Cardiac septum (tissue), 1 donor: ENCODE measurements at regions of chr7 and their contacts with region 1.

Region 1: GRCh38 chr7:152025077-152025936 is at the start of gene GALNT11:
- DNase-seq: peak; percentile 93
- total RNA-seq, gene GALNT11: 25.6 TPM

Region 2: DNA sequence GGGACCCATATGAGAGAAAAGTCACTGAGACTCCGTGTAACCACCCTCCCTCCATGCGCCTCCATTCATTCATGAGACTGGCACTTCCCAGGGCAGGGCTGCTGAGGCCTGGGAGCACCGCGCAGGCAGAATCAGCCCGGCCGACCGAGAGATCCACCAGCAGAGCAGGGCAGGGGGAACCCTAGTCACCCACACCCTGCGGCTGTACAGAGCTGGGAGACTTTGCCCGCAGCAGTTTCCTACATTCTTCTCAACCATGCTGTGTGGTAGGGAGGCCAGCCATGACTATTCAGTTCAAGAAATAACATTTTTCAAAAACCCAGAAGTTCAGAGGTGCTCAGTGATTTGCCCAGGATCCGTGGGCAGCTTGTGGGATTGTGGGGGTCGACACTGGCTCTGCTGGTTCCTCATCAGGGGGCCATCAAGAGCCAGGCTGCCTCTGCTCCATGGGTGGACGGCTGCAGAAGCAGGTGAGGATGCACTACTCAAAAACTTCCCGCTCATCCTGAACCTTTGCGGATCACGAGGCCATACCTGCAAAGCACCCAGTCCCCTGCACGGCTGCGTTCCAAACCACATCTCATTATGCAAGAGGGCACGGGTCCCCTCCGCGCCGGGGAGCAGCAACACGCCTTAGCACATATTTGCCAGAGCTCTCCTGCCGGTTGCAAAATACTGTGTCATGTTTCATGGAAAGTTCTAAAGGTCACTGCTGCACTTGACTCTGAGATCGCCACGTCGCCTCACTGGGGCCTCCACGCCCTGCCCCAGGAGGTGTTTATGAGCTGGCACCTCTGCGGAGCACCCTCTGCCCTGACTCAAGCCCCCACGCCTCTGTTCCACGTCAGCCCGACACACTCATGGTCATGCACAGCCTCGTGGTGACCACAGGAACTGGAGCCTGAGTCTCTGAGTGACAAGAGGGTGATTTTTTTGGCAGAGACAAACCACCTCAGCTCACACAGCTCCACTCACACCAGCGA is 280.4 kb before region 1 on chr7:
- intact Hi-C with region 1: no loop called
- DNase-seq: peak; percentile 85

Region 3: DNA sequence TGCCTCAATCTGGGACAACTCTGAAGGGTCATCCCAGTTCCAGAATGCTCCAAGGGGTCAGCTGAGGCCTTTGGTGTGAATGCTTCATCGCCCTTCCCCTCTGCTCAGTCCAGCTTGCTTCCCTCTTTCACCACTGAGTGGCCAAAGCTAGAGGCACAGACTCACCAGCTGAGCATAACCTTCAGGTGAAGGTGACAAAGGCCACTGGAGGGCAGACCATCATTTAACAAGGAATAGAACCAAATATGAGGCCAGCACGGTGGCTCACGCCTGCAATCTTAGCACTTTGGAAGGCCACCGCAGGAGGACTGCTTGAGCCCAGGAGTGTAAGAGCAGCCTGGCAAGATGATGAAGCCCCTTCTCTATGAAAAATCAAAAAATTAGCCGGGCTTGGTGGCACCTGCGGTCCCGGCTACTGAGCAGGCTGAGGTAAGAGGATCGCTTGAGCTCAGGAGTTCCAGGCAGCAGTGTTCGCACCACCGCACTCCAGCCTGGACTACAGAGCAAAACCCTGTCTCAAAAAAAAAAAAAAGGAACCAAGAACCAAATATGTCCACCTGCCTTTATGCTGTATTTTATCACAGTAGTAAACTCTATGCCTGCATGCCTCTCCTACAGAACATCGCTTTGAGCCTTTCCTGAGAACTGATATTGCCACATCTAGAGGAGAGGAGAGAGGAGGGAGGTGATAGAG is 161.8 kb before region 1 on chr7:
- intact Hi-C with region 1: loop called (anchors 10 kb)
- DNase-seq: no peak

Region 4: DNA sequence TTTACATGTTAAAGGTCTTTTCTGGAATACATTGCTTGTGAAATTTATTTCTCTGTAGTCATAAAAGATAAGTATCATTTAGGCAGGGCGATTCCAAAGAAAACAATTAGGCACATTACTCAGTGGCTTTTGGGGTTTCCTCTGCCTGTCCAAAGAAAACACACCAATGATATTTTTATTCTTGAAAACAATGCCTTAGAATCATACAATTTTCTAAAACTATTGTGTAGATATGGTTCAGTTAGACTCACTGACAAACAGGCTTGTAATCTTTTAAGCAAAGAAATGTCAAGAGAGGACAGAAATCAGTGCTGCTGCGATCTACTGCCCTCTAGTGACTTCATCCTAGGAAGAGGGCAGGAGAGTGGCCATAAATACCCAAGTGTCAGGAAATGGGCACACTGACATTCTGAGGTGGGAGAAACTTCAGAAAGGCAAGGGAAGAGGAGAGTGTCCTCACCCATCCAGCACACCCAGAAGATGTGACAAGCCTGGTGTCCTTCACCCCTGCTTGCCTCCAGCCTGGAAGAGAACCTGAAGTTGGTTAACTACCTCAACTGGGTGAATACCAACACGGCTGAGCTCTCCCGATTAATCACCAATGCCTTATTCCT is 120.7 kb after region 1 on chr7:
- intact Hi-C with region 1: loop called (anchors 10 kb)
- DNase-seq: no peak